MCF 10A (cell line): ENCODE measurements at regions of chr4 and their contacts with region 1.

Region 1: DNA sequence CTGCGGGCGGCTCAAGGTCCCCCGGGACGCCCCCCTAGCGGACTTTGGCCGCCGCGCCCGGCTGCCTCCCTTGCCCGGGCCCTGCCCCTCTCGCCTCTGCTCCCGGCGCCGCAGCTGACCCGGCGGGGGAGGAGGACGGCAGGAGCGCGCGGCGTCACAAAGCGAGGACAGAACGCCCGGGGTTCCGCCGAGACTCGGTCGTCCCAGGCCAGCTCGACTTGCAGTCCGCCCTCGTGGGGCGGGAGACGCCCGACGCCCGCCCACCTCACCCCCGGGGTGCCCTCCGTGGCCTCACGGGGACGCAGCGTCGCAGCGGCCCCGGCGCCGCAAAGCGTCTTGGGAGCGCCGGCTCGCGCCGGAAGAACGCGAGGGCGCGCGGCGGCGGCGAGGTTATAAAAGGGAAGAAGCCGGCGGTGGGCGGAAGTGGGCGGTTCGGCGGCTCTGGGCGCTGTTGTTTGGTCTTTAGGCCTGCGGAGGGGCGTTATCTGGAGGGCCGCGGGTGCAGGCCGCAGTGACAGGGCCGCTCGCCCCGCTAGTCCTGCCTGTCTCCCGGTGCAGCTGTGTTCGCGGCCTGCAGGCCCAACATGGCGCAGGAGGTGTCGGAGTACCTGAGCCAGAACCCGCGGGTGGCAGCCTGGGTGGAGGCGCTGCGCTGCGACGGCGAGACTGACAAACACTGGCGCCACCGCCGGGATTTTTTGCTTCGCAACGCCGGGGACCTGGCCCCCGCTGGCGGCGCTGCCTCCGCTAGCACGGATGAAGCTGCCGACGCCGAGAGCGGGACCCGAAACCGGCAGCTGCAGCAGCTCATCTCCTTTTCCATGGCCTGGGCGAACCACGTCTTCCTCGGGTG is at the start of gene CDKN2AIP:
- DNase-seq: peak; percentile 94
- H3K4me3 Mint-ChIP-seq: peak within 1 kb of the TSS; percentile 94
- H3K27ac Mint-ChIP-seq: peak within 1 kb of the TSS; percentile 84
- H3K4me1 Mint-ChIP-seq: peaks cover 16% of the 10 kb centered on the region
- H3K27me3 Mint-ChIP-seq: no peaks in the 10 kb centered on the region
- CTCF ChIP-seq: no peak
- total RNA-seq, gene CDKN2AIP: 12.0 and 13.4 TPM in 2 replicates

Region 2: GRCh38 chr4:183355405-183355804 is 89.0 kb before region 1 on chr4:
- CTCF ChIA-PET with region 1: no interaction called
- POLR2A ChIA-PET with region 1: interaction called, 12 read pairs
- intact Hi-C with region 1: no loop called
- DNase-seq: peak; percentile 55
- H3K4me3 Mint-ChIP-seq: no peak overlapping the region
- H3K27ac Mint-ChIP-seq: peak overlapping the region; percentile 16
- H3K4me1 Mint-ChIP-seq: peaks cover 39% of the 10 kb centered on the region
- H3K27me3 Mint-ChIP-seq: no peaks in the 10 kb centered on the region
- CTCF ChIP-seq: no peak

Region 3: DNA sequence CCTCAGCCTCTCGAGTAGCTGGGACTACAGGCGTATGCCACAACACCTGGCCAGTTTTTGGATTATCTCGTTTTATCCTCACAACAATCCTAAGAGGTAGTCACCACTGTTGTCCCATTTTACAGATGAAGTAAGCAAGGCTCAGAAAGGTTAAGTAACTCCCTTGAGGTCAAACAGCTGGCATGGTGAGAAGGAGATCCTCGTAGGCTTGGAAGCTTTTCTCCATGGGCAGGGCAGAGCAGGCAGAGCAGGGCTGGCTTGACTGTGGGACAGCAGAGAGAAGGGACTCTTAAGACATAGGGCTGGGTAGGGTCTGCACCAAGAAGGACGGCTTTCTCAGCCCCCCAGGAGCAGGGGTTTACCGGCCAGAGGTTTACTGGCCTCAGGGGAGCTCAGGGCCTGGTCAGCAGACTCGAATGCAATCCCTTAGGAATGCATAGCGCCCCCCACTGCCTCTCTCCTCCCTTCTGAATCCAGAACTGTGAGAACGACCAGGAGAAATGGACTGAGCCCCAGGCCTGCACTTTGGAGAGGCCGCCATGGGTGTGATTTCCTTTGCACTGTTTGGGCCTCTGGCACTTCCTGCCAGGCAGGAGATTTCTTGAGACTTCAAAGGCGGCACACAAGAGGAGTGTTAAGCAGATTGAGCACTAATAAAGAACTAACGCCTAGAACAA is 14.0 kb before region 1 on chr4:
- CTCF ChIA-PET with region 1: interaction called, 3 read pairs
- POLR2A ChIA-PET with region 1: interaction called, 14 read pairs
- intact Hi-C with region 1: no loop called
- DNase-seq: no peak
- H3K4me3 Mint-ChIP-seq: no peak overlapping the region
- H3K27ac Mint-ChIP-seq: no peak overlapping the region
- H3K4me1 Mint-ChIP-seq: no peaks in the 10 kb centered on the region
- H3K27me3 Mint-ChIP-seq: no peaks in the 10 kb centered on the region
- CTCF ChIP-seq: no peak

Region 4: GRCh38 chr4:183504064-183504929 is 59.9 kb after region 1 on chr4:
- CTCF ChIA-PET with region 1: interaction called, 4 read pairs
- POLR2A ChIA-PET with region 1: interaction called, 32 read pairs
- intact Hi-C with region 1: loop called (anchors 2 kb)
- DNase-seq: peak; percentile 98
- H3K4me3 Mint-ChIP-seq: peak overlapping the region; percentile 85
- H3K27ac Mint-ChIP-seq: peak overlapping the region; percentile 43
- H3K4me1 Mint-ChIP-seq: peaks cover 11% of the 10 kb centered on the region
- H3K27me3 Mint-ChIP-seq: no peaks in the 10 kb centered on the region
- CTCF ChIP-seq: peak; percentile 24

Region 5: GRCh38 chr4:183659029-183659871 is 214.8 kb after region 1 on chr4 and contains the starts of genes RWDD4 and TRAPPC11:
- CTCF ChIA-PET with region 1: no interaction called
- POLR2A ChIA-PET with region 1: interaction called, 15 read pairs
- intact Hi-C with region 1: no loop called
- DNase-seq: peak; percentile 98
- H3K4me3 Mint-ChIP-seq: peak within 1 kb of the TSS; percentile 85
- H3K27ac Mint-ChIP-seq: peak within 1 kb of the TSS; percentile 82
- H3K4me1 Mint-ChIP-seq: peaks cover 22% of the 10 kb centered on the region
- H3K27me3 Mint-ChIP-seq: no peaks in the 10 kb centered on the region
- CTCF ChIP-seq: peak; percentile 13
- total RNA-seq, gene RWDD4: 23.0 and 26.1 TPM in 2 replicates
- total RNA-seq, gene TRAPPC11: 29.4 and 35.0 TPM in 2 replicates